Activated T-helper 1 cell treated with anti-CD3 and anti-CD28 coated beads, Interleukin-12 subunit alpha, Interleukin-12 subunit beta, Interleukin-2, Interleukin-4 antibody, amounts not matched to agents 30 ng/mL and 10 ng/mL and 1 ng/mL, durations not matched to agents 14 hours and 24 hours and 36 hours (primary cell): ENCODE measurements at regions of chr7 and their contacts with region 1.

Region 1: DNA sequence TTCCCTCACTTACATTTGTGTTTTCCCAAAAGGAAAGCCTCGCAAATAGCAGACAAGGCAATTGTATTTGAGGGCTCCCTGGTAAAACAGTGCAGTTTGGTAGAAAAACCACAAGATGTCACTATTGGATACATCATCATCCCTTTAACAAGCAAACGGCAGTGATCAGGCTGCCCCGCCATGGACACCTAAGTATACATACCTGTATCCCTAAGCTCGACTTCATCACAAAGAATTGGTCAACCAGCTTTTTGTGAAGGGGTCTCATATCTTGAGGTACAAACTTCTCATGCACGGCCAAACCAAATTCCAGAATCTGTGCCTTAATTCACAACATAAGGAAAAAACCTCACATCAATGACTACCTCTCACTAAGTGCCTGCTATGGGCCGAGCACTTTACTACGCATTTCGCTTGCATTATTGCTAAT is 179.5 kb upstream of the IMMP2L start:
- DNase-seq: no peak
- H3K4me3 Mint-ChIP-seq: no peak overlapping the region
- H3K27ac Mint-ChIP-seq: no peak overlapping the region
- H3K4me1 Mint-ChIP-seq: no peaks in the 10 kb centered on the region
- H3K27me3 Mint-ChIP-seq: no peaks in the 10 kb centered on the region

Region 2: DNA sequence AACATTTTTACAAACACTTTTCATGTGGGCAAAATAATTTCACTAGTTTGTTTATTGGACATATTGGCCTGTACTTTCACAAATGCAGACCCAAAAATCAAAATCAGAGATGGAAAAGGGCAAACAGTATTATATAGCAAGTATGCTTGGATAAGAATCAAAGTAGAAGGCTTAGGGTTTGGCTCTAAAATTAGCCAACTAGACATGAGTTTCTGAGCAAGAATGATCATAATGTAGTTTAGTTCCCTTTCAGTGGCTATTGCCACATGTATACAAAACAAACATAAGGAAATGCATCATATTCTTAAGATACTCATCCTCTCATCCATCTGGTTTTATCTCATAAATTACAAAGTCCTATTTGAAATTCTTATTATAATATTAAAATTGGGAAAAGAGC is 312.0 kb before region 1 on chr7:
- intact Hi-C with region 1: no loop called
- DNase-seq: no peak
- H3K4me3 Mint-ChIP-seq: no peak overlapping the region
- H3K27ac Mint-ChIP-seq: no peak overlapping the region
- H3K4me1 Mint-ChIP-seq: no peaks in the 10 kb centered on the region
- H3K27me3 Mint-ChIP-seq: no peaks in the 10 kb centered on the region

Region 3: GRCh38 chr7:111508387-111508786 is 233.4 kb before region 1 on chr7:
- intact Hi-C with region 1: no loop called
- DNase-seq: no peak
- H3K4me3 Mint-ChIP-seq: no peak overlapping the region
- H3K27ac Mint-ChIP-seq: no peak overlapping the region
- H3K4me1 Mint-ChIP-seq: no peaks in the 10 kb centered on the region
- H3K27me3 Mint-ChIP-seq: no peaks in the 10 kb centered on the region

Region 4: GRCh38 chr7:111630862-111631261 is 111.0 kb before region 1 on chr7:
- intact Hi-C with region 1: no loop called
- DNase-seq: no peak
- H3K4me3 Mint-ChIP-seq: no peak overlapping the region
- H3K27ac Mint-ChIP-seq: no peak overlapping the region
- H3K4me1 Mint-ChIP-seq: no peaks in the 10 kb centered on the region
- H3K27me3 Mint-ChIP-seq: peaks cover 2% of the 10 kb centered on the region

Region 5: GRCh38 chr7:112495810-112496462 is 754.1 kb after region 1 on chr7:
- intact Hi-C with region 1: loop called (anchors 1 kb)
- DNase-seq: no peak
- H3K4me3 Mint-ChIP-seq: no peak overlapping the region
- H3K27ac Mint-ChIP-seq: no peak overlapping the region
- H3K4me1 Mint-ChIP-seq: no peaks in the 10 kb centered on the region
- H3K27me3 Mint-ChIP-seq: peaks cover 21% of the 10 kb centered on the region

Region 6: GRCh38 chr7:112869111-112869757 is 1127.4 kb after region 1 on chr7:
- intact Hi-C with region 1: loop called (anchors 1 kb)
- DNase-seq: peak; percentile 27
- H3K4me3 Mint-ChIP-seq: no peak overlapping the region
- H3K27ac Mint-ChIP-seq: no peak overlapping the region
- H3K4me1 Mint-ChIP-seq: peaks cover 9% of the 10 kb centered on the region
- H3K27me3 Mint-ChIP-seq: no peaks in the 10 kb centered on the region

Region 7: DNA sequence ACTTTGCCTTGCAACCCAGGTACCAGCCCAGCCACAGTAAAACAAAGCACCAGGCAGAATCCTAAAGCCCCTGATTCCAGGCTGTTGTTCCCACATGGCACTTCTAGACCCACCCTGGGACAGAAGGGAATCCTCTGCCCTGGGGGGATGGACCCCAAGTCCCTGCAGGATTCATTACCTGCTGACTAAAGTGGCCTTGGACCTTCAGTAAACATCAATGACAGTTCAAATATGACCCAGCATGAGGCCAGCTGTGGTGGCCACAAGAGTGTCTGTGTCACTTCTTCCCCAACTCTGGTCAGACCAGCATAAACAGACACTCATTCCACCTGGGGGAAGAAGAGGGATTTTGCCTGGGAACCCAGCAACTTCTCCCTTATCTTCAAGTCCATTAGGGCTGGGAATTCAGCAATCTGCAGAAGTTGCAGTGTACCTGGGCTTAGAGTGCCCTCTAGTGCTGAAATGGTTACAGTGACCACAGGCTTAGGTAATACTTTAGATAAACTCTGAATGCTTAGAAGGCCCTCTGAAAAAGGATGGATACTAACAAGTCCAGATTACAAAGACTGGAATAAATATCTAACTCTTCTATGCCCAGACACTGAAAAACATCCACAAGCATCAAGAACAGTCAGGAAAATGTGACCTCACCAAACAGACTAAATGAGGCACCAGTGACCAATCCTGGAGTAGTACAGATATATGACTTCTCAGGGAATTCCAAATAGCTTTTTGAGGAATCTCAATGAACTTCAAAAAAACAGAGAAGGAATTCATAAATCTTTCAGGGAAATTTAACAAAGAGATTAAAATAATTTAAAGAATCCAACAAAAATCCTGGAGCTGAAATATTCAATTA is 1156.8 kb after region 1 on chr7:
- intact Hi-C with region 1: loop called (anchors 1 kb)
- DNase-seq: peak; percentile 9
- H3K4me3 Mint-ChIP-seq: no peak overlapping the region
- H3K27ac Mint-ChIP-seq: no peak overlapping the region
- H3K4me1 Mint-ChIP-seq: no peaks in the 10 kb centered on the region
- H3K27me3 Mint-ChIP-seq: no peaks in the 10 kb centered on the region